Endothelial cell of umbilical vein (primary cell): ENCODE measurements at regions of chr1 and their contacts with region 1.

Region 1: GRCh38 chr1:21963477-21964217 is 13.2 kb upstream of the CELA3B start:
- DNase-seq: peak; percentile 81
- H3K4me3 ChIP-seq: no peak overlapping the region
- H3K27ac ChIP-seq: peak overlapping the region; percentile 1
- H3K4me1 ChIP-seq: peaks cover 26% of the 10 kb centered on the region
- H3K27me3 ChIP-seq: no peaks in the 10 kb centered on the region
- CTCF ChIP-seq: peak; percentile 85 to 91
- POLR2A ChIP-seq: peak; percentile 29

Region 2: DNA sequence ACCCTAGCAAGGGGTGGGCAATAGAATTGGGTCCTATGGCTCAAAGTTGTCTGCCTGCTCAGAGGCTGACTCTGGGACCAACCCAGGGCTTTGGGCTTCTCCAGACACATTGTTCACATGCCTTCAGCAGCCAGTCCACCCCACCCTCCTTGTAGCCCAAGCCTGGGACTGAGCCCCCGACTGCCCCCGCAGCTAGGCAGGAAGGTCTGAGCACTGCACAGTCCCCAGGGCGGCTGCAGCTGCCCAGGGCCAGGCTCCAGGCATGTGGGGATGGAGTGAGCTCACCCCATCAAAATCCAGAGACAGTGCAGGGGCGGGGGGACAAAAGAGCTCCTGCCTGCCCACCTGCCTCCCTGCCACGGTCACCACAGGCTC is 62.2 kb before region 1 on chr1:
- CTCF ChIA-PET with region 1: interaction called, 18 read pairs
- POLR2A ChIA-PET with region 1: interaction called, 3 read pairs
- dilution Hi-C with region 1: no loop called
- intact Hi-C with region 1: loop called (anchors 1 kb)
- DNase-seq: peak; percentile 81
- H3K4me3 ChIP-seq: no peak overlapping the region
- H3K27ac ChIP-seq: peak overlapping the region; percentile 87
- H3K4me1 ChIP-seq: peaks cover 92% of the 10 kb centered on the region
- H3K27me3 ChIP-seq: no peaks in the 10 kb centered on the region
- CTCF ChIP-seq: peak; percentile 18 to 46
- POLR2A ChIP-seq: no peak